Thyroid gland (tissue), 4 donors: ENCODE measurements at regions of chr22 and their contacts with region 1.

Region 1: GRCh38 chr22:31345331-31346254 is 553 bp downstream of the PATZ1 start:
- DNase-seq: peak; percentile 85 to 87
- H3K4me3 ChIP-seq: peak overlapping the region in 2 of 3 donors; percentile 48 to 60
- H3K27ac ChIP-seq: peak overlapping the region; percentile 90 to 98 (median 94)
- H3K4me1 ChIP-seq: peaks cover 48 to 52% of the 10 kb centered on the region in 2 donors
- H3K27me3 ChIP-seq: no peaks in the 10 kb centered on the region
- CTCF ChIP-seq: peak; percentile 62 to 98 (median 90)
- POLR2A ChIP-seq: peak in 1 of 2 donors; percentile 71

Region 2: GRCh38 chr22:31199183-31199582 is 146.4 kb before region 1 on chr22:
- intact Hi-C with region 1: no loop called
- DNase-seq: no peak
- H3K4me3 ChIP-seq: no peak overlapping the region
- H3K27ac ChIP-seq: no peak overlapping the region
- H3K4me1 ChIP-seq: no peaks in the 10 kb centered on the region
- H3K27me3 ChIP-seq: no peaks in the 10 kb centered on the region
- CTCF ChIP-seq: no peak
- POLR2A ChIP-seq: no peak

Region 3: GRCh38 chr22:31211862-31212730 is 133.5 kb before region 1 on chr22 and contains the start of gene LIMK2:
- intact Hi-C with region 1: no loop called
- DNase-seq: peak; percentile 97
- H3K4me3 ChIP-seq: peak within 1 kb of the TSS; percentile 76 to 85 (median 76)
- H3K27ac ChIP-seq: peak within 1 kb of the TSS; percentile 74 to 85 (median 84)
- H3K4me1 ChIP-seq: peaks cover 21 to 54% of the 10 kb centered on the region in 2 donors
- H3K27me3 ChIP-seq: no peaks in the 10 kb centered on the region
- CTCF ChIP-seq: peak; percentile 60 to 93 (median 82)
- POLR2A ChIP-seq: peak in 1 of 2 donors; percentile 79
- total RNA-seq, gene LIMK2: 85.0 to 123 (median 99.4) TPM

Region 4: GRCh38 chr22:31399211-31400028 is 53.8 kb after region 1 on chr22 and contains the start of gene DRG1:
- intact Hi-C with region 1: loop called (anchors 2 kb)
- DNase-seq: peak; percentile 97 to 98
- H3K4me3 ChIP-seq: peak within 1 kb of the TSS; percentile 23 to 80 (median 67)
- H3K27ac ChIP-seq: peak within 1 kb of the TSS; percentile 77 to 85 (median 79)
- H3K4me1 ChIP-seq: peaks cover 10 to 15% of the 10 kb centered on the region in 2 donors
- H3K27me3 ChIP-seq: no peaks in the 10 kb centered on the region
- CTCF ChIP-seq: peak in 4 of 6 experiments; percentile 2 to 40 (median 10)
- POLR2A ChIP-seq: peak in 1 of 2 donors; percentile 89
- total RNA-seq, gene DRG1: 57.7 to 67.6 (median 66.3) TPM

Region 5: GRCh38 chr22:31496007-31496734 is 150.6 kb after region 1 on chr22 and contains the start of gene SFI1:
- intact Hi-C with region 1: loop called (anchors 10 kb)
- DNase-seq: peak; percentile 93 to 94
- H3K4me3 ChIP-seq: peak within 1 kb of the TSS; percentile 30 to 82 (median 50)
- H3K27ac ChIP-seq: peak within 1 kb of the TSS; percentile 32 to 87 (median 80)
- H3K4me1 ChIP-seq: peaks cover 15 to 22% of the 10 kb centered on the region in 2 donors
- H3K27me3 ChIP-seq: no peaks in the 10 kb centered on the region
- CTCF ChIP-seq: peak in 2 of 6 experiments; percentile 8 to 10
- POLR2A ChIP-seq: peak in 1 of 2 donors; percentile 84
- total RNA-seq, gene SFI1: 31.1 to 57.6 (median 43.1) TPM